Activated naive CD4-positive, alpha-beta T cell treated with anti-CD3 and anti-CD28 coated beads, Interleukin-2, amount 10 ng/mL, durations not matched to agents 7 days and 5 days (primary cell): ENCODE measurements at regions of chr14 and their contacts with region 1.

Region 1: DNA sequence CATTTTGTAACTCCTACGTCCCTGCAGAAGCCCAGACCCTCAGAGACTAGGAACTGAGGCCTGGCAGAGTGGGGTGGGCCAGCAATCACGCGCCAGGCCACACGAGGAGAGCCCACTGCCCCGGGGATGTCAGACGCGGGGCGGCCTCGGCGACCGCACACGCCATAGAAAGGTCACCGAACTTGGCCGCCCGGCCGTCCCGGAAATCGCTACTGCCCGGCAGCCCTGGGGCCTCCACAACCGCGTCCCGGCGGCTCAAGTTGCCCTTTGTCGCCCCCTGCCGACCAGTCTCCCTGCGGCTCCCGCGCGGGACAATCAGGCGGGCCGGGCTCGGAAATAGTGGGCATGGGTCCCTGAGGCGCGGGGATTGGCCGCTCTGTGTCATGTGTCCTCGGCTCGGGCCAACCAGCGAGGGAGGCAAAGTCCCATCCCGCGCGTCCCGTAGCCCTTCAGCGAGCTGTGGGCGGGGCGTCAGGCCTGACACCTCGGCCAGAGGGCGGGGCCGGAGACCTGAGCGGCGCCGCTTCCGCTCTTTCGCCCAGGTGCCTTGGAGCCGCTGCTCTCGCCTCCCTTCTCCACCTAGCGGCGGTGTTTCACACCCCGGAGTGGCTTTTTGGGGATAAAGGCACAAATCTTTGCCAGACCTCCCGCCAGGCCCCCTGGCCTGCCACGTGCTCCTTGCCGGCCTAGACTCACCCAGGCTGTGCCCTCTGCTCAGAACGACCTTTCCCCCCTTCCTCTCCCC is 33.4 kb upstream of the DEGS2 start:
- DNase-seq: peak; percentile 100
- H3K4me3 Mint-ChIP-seq: peak overlapping the region; percentile 63
- H3K27ac Mint-ChIP-seq: peak overlapping the region; percentile 84
- H3K4me1 Mint-ChIP-seq: peaks cover 20% of the 10 kb centered on the region
- H3K27me3 Mint-ChIP-seq: peaks cover 3% of the 10 kb centered on the region

Region 2: DNA sequence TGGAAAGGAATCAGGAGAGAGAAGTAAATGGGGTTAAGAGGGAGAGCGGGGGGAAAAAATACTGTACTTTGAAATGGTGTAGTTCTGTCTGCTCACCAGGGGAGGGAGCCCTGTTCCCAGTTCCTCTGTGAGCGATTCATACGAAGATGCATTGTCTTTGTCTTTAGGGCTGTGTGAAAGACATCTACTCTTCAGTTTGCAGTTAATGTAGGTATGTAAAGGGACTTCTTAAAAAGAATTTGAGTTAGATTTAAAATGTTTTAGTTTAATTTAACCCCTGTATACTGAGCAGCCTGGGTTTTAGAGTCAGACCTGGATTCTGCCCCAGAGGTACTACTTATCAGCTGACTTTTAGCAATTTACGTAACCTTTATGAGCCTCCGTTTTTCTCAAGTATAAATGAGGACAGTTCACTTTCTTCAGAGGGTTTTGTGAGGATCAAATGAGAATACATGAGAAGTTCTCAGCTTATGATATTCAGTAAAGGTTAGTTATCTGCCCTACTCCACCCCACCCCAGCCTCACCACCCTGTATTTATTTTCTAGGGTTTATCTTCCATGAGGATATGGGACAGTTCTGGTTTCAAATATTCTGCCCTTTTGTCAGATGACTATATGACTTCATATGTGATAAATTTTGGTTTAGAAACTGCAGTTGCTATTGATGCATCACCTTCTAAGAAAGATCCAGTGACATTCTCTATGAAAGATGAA is 210.2 kb before region 1 on chr14:
- CTCF ChIA-PET with region 1: interaction called, 67 read pairs
- DNase-seq: peak; percentile 71
- H3K4me3 Mint-ChIP-seq: no peak overlapping the region
- H3K27ac Mint-ChIP-seq: no peak overlapping the region
- H3K4me1 Mint-ChIP-seq: peaks cover 17% of the 10 kb centered on the region
- H3K27me3 Mint-ChIP-seq: no peaks in the 10 kb centered on the region

Region 3: GRCh38 chr14:100067971-100068959 is 124.6 kb before region 1 on chr14:
- CTCF ChIA-PET with region 1: interaction called, 20 read pairs
- DNase-seq: peak; percentile 92
- H3K4me3 Mint-ChIP-seq: peak overlapping the region; percentile 90
- H3K27ac Mint-ChIP-seq: peak overlapping the region; percentile 99
- H3K4me1 Mint-ChIP-seq: peaks cover 46% of the 10 kb centered on the region
- H3K27me3 Mint-ChIP-seq: no peaks in the 10 kb centered on the region

Region 4: GRCh38 chr14:100108042-100108825 is 84.6 kb before region 1 on chr14:
- CTCF ChIA-PET with region 1: interaction called, 10 read pairs
- DNase-seq: peak; percentile 91
- H3K4me3 Mint-ChIP-seq: no peak overlapping the region
- H3K27ac Mint-ChIP-seq: peak overlapping the region; percentile 94
- H3K4me1 Mint-ChIP-seq: peaks cover 77% of the 10 kb centered on the region
- H3K27me3 Mint-ChIP-seq: no peaks in the 10 kb centered on the region

Region 5: DNA sequence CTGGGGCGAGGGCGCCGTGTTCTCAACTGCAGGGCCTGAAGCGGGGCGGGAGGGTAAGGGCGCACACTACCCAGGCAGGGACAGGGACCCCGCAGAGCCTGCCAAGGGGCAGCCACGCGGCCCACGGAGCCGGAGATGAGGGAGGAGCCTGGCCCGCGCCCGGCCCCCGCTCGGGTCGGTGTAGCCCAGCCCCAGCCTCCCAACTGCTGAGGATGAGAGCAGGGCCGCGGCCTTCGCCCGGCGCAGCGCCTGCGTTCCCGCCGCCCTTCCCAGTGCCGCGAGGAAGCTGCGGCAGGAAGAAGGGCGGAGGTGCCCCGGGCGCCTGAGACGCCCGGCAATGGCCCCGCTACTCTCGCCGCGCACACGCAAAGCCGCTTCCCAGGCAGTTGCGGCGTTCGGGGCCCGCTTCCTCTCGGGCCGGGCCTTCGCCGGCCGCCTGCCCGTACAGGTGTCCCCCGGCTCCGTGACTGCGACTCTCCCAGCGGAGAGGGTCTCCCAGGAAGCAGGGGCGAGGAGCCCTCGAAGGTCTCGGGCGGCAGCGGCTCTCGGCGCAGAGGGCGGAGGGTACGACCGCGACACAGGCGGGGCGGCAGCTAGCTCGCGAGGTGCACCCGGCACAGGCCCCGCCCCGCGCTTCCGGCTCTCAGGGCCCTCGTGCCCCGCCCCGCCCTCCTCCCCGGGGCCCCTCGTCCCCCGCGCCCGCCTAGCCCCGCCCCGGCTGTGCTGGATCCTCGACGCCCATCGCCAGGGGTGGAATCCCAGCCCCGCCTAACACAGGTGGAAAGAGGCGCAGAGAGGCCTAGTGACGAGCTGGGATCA is 21.3 kb after region 1 on chr14:
- CTCF ChIA-PET with region 1: interaction called, 58 read pairs
- DNase-seq: peak; percentile 95
- H3K4me3 Mint-ChIP-seq: peak overlapping the region; percentile 77
- H3K27ac Mint-ChIP-seq: peak overlapping the region; percentile 88
- H3K4me1 Mint-ChIP-seq: peaks cover 39% of the 10 kb centered on the region
- H3K27me3 Mint-ChIP-seq: peaks cover 15% of the 10 kb centered on the region

Region 6: DNA sequence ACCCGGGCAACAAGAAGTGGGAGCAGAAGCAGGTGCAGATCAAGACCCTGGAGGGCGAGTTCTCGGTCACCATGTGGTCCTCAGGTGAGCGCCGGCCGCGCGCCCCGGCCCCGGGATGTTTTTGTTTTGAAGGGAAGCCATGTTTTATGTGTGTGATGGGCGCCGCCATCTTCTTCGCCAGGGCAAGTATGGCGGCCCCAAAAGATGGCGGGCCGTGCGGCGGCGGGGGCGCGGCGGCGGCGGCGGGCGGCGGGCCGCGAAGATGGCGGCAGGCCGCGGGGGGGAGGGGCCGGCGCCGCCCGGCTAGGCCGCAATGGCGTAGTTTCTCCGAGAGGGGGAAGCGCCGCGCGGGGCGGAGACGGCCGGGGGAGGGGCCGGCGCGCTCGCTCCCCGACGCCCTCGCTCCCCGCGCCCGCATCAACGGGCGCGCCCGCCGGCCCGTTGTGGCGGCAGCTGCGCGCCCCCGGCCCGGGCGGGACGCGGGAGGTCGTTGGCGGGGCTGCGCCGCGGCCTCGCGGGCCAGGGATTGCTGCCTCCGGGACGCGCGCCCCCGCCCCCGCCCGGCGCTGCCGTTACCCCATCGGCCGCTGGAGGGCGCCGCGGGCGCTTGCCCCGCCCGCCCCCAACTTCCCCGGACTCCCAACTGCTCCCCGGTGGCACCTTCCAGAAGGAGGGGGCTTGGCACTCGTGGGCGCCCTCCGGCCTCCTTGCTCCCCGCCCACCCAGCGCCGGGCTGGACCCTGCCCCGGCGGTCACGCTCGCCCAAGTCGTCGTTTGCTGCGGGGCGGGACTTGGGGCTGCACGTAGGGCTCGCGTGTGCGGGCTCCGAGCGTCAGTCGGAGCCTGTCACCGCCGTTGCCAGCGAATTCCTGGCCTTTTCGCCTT is 47.2 kb after region 1 on chr14:
- CTCF ChIA-PET with region 1: interaction called, 11 read pairs
- DNase-seq: peak; percentile 87
- H3K4me3 Mint-ChIP-seq: peak overlapping the region; percentile 92
- H3K27ac Mint-ChIP-seq: peak overlapping the region; percentile 93
- H3K4me1 Mint-ChIP-seq: peaks cover 61% of the 10 kb centered on the region
- H3K27me3 Mint-ChIP-seq: peaks cover 4% of the 10 kb centered on the region